ENCODE measurements at regions of chr19 and their contacts with region 1.

Region 1: GRCh38 chr19:6737284-6738046 is at the start of gene GPR108:
- DNase-seq: peak; percentile 100
- H3K4me3 ChIP-seq: peak within 1 kb of the TSS; percentile 83
- H3K27ac ChIP-seq: peak within 1 kb of the TSS; percentile 74
- H3K4me1 ChIP-seq: peaks cover 53% of the 10 kb centered on the region
- CTCF ChIP-seq: no peak
- total RNA-seq, gene GPR108: 77.5 and 88.3 TPM in 2 replicates

Region 2: GRCh38 chr19:6372594-6373095 is 364.8 kb before region 1 on chr19 and contains the start of gene ALKBH7:
- CTCF ChIA-PET with region 1: no interaction called
- POLR2A ChIA-PET with region 1: no interaction called
- intact Hi-C with region 1: loop called (anchors 2 kb)
- DNase-seq: peak; percentile 100
- H3K4me3 ChIP-seq: peak within 1 kb of the TSS; percentile 84
- H3K27ac ChIP-seq: peak within 1 kb of the TSS; percentile 85
- H3K4me1 ChIP-seq: peaks cover 13% of the 10 kb centered on the region
- CTCF ChIP-seq: no peak
- total RNA-seq, gene ALKBH7: 35.8 and 61.0 TPM in 2 replicates

Region 3: GRCh38 chr19:6516659-6517291 is 220.7 kb before region 1 on chr19:
- CTCF ChIA-PET with region 1: no interaction called
- POLR2A ChIA-PET with region 1: no interaction called
- intact Hi-C with region 1: loop called (anchors 1 kb)
- DNase-seq: peak; percentile 98
- H3K4me3 ChIP-seq: peak overlapping the region; percentile 70
- H3K27ac ChIP-seq: peak overlapping the region; percentile 90
- H3K4me1 ChIP-seq: peaks cover 53% of the 10 kb centered on the region
- CTCF ChIP-seq: peak; percentile 100

Region 4: GRCh38 chr19:6632002-6632621 is 105.4 kb before region 1 on chr19:
- CTCF ChIA-PET with region 1: no interaction called
- POLR2A ChIA-PET with region 1: no interaction called
- intact Hi-C with region 1: loop called (anchors 2 kb)
- DNase-seq: peak; percentile 92
- H3K4me3 ChIP-seq: no peak overlapping the region
- H3K27ac ChIP-seq: peak overlapping the region; percentile 7
- H3K4me1 ChIP-seq: peaks cover 33% of the 10 kb centered on the region
- CTCF ChIP-seq: peak; percentile 99

Region 5: GRCh38 chr19:6674868-6675305 is 62.6 kb before region 1 on chr19:
- CTCF ChIA-PET with region 1: no interaction called
- POLR2A ChIA-PET with region 1: no interaction called
- intact Hi-C with region 1: no loop called
- DNase-seq: peak; percentile 58
- H3K4me3 ChIP-seq: no peak overlapping the region
- H3K27ac ChIP-seq: no peak overlapping the region
- H3K4me1 ChIP-seq: peaks cover 23% of the 10 kb centered on the region
- CTCF ChIP-seq: 0 out of 2 replicates have a peak, but pooled peaks have one; percentile 27

Region 6: DNA sequence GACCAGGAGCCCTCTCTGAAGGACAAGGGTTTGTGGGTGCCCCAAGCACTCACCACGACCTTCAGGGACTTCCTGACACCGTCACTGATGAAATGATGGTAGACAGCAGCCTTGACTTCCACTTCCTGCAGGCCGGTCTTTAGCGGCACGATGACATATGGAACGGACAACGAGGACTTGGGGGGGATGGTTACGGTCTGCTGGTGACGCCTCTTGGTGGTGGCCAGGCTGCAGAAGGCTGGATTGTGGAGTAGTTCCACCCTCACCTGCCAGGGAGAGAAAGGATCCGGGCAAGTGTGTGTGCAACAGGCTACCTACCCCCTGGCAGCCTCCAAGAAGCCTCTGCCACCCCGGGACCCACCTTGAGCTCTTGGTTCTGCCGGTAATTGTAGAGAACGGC is 40.2 kb before region 1 on chr19:
- CTCF ChIA-PET with region 1: no interaction called
- POLR2A ChIA-PET with region 1: no interaction called
- intact Hi-C with region 1: no loop called
- DNase-seq: no peak
- H3K4me3 ChIP-seq: no peak overlapping the region
- H3K27ac ChIP-seq: no peak overlapping the region
- H3K4me1 ChIP-seq: no peaks in the 10 kb centered on the region
- CTCF ChIP-seq: no peak

Region 7: GRCh38 chr19:6714749-6715555 is 22.5 kb before region 1 on chr19:
- CTCF ChIA-PET with region 1: no interaction called
- POLR2A ChIA-PET with region 1: no interaction called
- intact Hi-C with region 1: no loop called
- DNase-seq: no peak
- H3K4me3 ChIP-seq: no peak overlapping the region
- H3K27ac ChIP-seq: no peak overlapping the region
- H3K4me1 ChIP-seq: peaks cover 12% of the 10 kb centered on the region
- CTCF ChIP-seq: no peak

Region 8: GRCh38 chr19:6767357-6768235 is 30.1 kb after region 1 on chr19 and contains the start of gene SH2D3A:
- CTCF ChIA-PET with region 1: no interaction called
- POLR2A ChIA-PET with region 1: interaction called, 8 read pairs
- intact Hi-C with region 1: loop called (anchors 1 kb)
- DNase-seq: peak; percentile 99
- H3K4me3 ChIP-seq: peak within 1 kb of the TSS; percentile 75
- H3K27ac ChIP-seq: peak within 1 kb of the TSS; percentile 47
- H3K4me1 ChIP-seq: peaks cover 32% of the 10 kb centered on the region
- CTCF ChIP-seq: no peak
- total RNA-seq, gene SH2D3A: 7.8 and 8.5 TPM in 2 replicates

Region 9: DNA sequence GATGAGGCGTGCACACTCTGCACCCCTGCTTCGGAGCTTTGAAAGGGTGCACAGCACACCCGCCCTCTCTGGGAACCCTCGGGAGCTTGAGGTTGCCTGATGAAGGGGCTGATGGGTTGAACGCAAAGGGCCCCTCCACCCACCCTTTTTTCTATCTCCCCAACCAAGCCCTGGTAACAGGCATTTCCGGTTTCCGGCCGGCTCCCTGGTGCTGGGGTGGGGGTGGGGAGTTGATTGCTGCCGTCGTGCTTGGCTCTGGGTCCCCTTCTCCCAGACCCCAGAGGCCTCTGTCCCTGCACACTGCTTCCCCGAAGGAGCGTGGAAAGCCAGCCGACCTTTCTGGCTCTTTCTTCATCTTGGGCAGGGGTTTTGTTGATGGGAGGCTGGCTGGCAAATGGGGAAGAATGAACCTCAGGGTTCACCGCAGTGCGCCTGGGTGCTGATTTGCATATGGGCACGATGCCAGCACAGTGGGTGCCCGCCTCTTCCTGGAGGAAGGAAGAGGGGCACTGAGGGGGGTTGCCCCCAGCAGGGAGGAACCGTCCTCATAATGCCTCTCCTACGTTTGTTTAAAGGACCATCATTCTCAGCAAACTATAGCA is 64.1 kb after region 1 on chr19:
- CTCF ChIA-PET with region 1: no interaction called
- POLR2A ChIA-PET with region 1: no interaction called
- intact Hi-C with region 1: loop called (anchors 1 kb)
- DNase-seq: peak; percentile 97
- H3K4me3 ChIP-seq: peak overlapping the region; percentile 66
- H3K27ac ChIP-seq: peak overlapping the region; percentile 94
- H3K4me1 ChIP-seq: peaks cover 75% of the 10 kb centered on the region
- CTCF ChIP-seq: no peak

Measured in OCI-LY7 (cell line).